ENCODE measurements at regions of chr18 and their contacts with region 1.

Region 1: GRCh38 chr18:22667616-22668422 is 250.1 kb upstream of the CTAGE1 start:
- DNase-seq: no peak
- H3K4me3 ChIP-seq: no peak overlapping the region
- H3K27ac ChIP-seq: peak overlapping the region in 3 of 4 donors; percentile 69 to 85 (median 79)
- H3K4me1 ChIP-seq: peaks cover 0 to 41% (median 28%) of the 10 kb centered on the region in 4 donors
- H3K27me3 ChIP-seq: no peaks in the 10 kb centered on the region
- CTCF ChIP-seq: no peak
- EP300 ChIP-seq: peak in 3 of 4 donors; percentile 72 to 83 (median 77)
- POLR2A ChIP-seq: no peak

Region 2: GRCh38 chr18:21557607-21558253 is 1110.1 kb before region 1 on chr18:
- intact Hi-C with region 1: no loop called
- DNase-seq: no peak
- H3K4me3 ChIP-seq: no peak overlapping the region
- H3K27ac ChIP-seq: no peak overlapping the region
- H3K4me1 ChIP-seq: no peaks in the 10 kb centered on the region
- H3K27me3 ChIP-seq: no peaks in the 10 kb centered on the region
- CTCF ChIP-seq: no peak
- EP300 ChIP-seq: no peak
- POLR2A ChIP-seq: no peak

Region 3: GRCh38 chr18:22683196-22683676 is 15.4 kb after region 1 on chr18:
- intact Hi-C with region 1: loop called (anchors 2 kb)
- DNase-seq: peak; percentile 91
- H3K4me3 ChIP-seq: no peak overlapping the region
- H3K27ac ChIP-seq: peak overlapping the region; percentile 12 to 71 (median 43)
- H3K4me1 ChIP-seq: peaks cover 0 to 30% (median 27%) of the 10 kb centered on the region in 4 donors
- H3K27me3 ChIP-seq: no peaks in the 10 kb centered on the region
- CTCF ChIP-seq: no peak
- EP300 ChIP-seq: peak; percentile 71 to 91 (median 82)
- POLR2A ChIP-seq: no peak